K562 (cell line): ENCODE measurements at regions of chr3 and their contacts with region 1.

Region 1: DNA sequence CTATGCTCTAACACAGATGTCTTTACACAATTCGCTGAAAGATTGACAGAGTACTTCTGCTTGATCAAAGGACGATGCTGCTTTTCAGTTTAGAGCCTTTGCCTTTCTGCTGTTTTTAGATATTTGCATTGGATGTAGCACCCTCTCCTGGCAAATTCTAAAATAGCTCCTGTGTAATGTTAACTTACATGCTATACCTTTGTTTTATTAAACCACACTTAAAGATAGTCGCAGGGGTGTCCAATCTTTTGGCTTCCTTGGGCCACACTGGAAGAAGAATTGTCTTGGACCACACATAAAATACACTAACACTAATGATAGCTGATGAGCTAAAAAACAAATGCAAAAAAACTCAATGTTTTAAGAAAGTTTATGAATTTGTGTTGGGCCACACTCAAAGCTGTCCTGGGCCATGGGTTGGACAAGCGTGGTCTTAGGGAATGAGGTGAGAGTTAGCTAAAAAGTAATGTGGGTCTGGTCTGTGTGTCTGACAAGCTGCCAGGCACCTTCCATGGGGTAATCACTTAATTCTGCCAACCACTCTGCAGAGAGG is 62.9 kb downstream of the ATG7 start:
- DNase-seq: peak; percentile 44 to 70 (median 52)
- ATAC-seq: peak; percentile 94
- H3K4me3 ChIP-seq: no peak overlapping the region
- H3K27ac ChIP-seq: no peak overlapping the region
- H3K4me1 ChIP-seq: no peaks in the 10 kb centered on the region
- H3K27me3 ChIP-seq: no peaks in the 10 kb centered on the region
- CTCF ChIP-seq: peak; percentile 64 to 89 (median 67); a peak in 5 of 6 replicates
- EP300 ChIP-seq: no peak
- POLR2A ChIP-seq: no peak
- RAD21 ChIP-seq: peak; percentile 90 to 97

Region 2: DNA sequence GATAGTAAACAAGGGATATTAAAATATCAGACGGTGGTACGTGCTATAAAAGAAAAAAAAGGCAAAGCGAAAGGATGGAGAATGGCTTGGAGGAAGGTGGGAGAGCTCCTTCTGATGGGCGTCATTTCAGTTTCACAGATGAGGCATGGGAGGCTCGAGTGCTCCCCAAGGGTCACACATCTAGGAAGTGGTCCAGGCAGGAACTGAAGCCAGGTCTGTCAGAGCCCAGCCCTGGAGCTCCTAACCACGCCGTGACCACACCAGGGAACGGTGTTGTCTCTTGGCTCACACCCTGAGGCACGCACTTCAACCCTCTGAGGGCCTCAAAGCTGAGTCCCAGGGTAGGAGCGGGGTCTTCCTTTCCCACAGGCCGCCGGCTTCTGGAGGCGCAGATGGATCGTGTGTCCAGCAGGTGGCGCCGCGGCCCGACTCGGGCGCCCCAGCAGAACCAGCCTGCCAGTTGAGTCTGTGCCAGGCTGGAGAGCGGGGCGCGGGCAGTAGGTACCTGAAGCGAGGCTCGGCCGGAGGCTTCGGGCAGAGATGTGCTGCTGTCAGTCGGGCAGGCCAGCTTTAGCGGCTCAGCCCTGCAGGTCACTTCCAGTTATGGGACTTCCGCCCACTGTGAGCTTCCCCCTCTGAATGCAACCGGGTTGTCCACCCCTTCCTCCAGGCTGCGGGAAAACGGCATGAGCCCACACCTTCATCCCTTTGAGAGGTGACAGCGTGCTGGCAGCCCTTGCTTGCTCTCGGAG is 274.5 kb before region 1 on chr3:
- CTCF ChIA-PET with region 1: interaction called, 3 read pairs
- POLR2A ChIA-PET with region 1: no interaction called
- in situ Hi-C with region 1: no loop called
- intact Hi-C with region 1: loop called (anchors 1 kb)
- DNase-seq: peak; percentile 53 to 77 (median 70)
- ATAC-seq: peak; percentile 92
- H3K4me3 ChIP-seq: no peak overlapping the region
- H3K27ac ChIP-seq: no peak overlapping the region
- H3K4me1 ChIP-seq: peaks cover 0 to 10% of the 10 kb centered on the region in 2 experiments; a peak in 2 of 5 replicates
- H3K27me3 ChIP-seq: peaks cover 0 to 19% of the 10 kb centered on the region in 2 experiments; a peak in 2 of 5 replicates
- CTCF ChIP-seq: peak; percentile 71 to 87 (median 82)
- EP300 ChIP-seq: no peak
- POLR2A ChIP-seq: no peak
- RAD21 ChIP-seq: peak; percentile 66 to 79

Region 3: GRCh38 chr3:11230125-11230524 is 105.0 kb before region 1 on chr3:
- CTCF ChIA-PET with region 1: no interaction called
- POLR2A ChIA-PET with region 1: interaction called, 4 read pairs
- in situ Hi-C with region 1: loop called (anchors 5 kb)
- intact Hi-C with region 1: no loop called
- DNase-seq: no peak
- ATAC-seq: no peak
- H3K4me3 ChIP-seq: no peak overlapping the region
- H3K27ac ChIP-seq: no peak overlapping the region
- H3K4me1 ChIP-seq: peaks cover 0 to 3% of the 10 kb centered on the region in 2 experiments; a peak in 2 of 5 replicates
- H3K27me3 ChIP-seq: peaks cover 10 to 15% of the 10 kb centered on the region in 2 experiments
- CTCF ChIP-seq: no peak
- EP300 ChIP-seq: no peak
- POLR2A ChIP-seq: no peak
- RAD21 ChIP-seq: no peak

Region 4: DNA sequence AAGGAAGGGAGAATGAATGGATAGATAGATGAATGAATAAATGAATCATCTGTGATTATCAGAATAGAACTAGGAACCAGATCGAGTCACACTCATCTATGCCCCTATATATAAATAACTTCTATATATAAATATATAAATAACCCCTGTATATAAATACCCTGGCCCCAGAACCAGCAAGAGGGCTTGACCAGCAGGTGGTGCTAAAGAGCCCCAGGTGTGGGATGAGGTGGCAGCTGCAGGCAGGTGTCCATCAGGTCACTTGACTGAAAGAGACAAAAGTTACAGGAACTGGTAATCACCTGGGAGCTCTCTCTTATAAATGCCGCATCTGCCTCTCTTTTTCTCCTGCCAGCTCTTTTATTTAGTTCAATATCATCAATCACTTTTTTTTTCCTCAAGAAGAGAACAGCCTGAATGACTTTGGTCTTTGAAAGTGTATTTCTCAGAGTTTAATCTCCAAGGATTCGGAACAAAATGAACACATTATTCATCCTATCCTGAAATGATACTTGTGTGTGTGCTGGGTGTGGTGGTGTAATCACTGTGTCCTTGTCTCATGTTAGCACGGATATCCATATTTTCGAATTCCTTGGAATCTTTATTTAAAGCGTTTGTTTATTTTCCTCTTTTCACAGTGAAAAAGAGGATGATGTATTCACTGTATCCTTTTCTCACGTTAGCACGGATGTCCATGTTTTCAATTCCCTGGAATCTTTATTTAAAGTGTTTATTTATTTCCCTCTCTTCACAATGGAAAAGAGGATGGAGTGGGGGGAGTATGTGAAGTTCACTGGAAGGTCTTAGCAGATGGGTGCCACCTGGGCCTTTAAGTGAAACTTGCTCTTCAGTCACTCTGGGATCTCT is 98.3 kb before region 1 on chr3:
- CTCF ChIA-PET with region 1: interaction called, 29 read pairs
- POLR2A ChIA-PET with region 1: interaction called, 7 read pairs
- in situ Hi-C with region 1: loop called (anchors 5 kb)
- intact Hi-C with region 1: loop called (anchors 1 kb)
- DNase-seq: peak; percentile 70 to 79 (median 76)
- ATAC-seq: peak; percentile 96
- H3K4me3 ChIP-seq: no peak overlapping the region
- H3K27ac ChIP-seq: no peak overlapping the region
- H3K4me1 ChIP-seq: no peaks in the 10 kb centered on the region
- H3K27me3 ChIP-seq: peaks cover 13% of the 10 kb centered on the region in 2 experiments
- CTCF ChIP-seq: peak; percentile 82 to 93 (median 89)
- EP300 ChIP-seq: no peak
- POLR2A ChIP-seq: no peak
- RAD21 ChIP-seq: peak; percentile 76 to 83

Region 5: DNA sequence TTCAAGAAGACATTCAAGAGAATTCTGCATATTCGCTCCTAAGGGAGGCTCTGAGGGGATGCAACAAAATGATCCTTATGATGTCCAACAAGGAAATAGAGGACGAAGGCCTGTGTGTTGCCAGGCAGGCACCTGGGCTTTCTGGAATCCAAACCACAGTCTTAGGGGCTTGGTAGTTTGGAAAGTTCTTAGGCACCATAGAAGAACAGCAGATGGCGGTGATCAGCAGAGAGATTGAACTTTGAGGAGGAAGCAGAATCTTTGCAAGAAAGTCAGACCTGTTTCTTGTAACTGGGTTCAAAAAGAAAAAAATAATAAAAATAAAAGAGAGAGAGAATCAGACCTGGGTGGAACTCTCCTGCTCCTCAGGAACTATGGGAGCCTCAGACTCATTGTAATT is 74.7 kb before region 1 on chr3:
- CTCF ChIA-PET with region 1: no interaction called
- POLR2A ChIA-PET with region 1: interaction called, 3 read pairs
- in situ Hi-C with region 1: no loop called
- intact Hi-C with region 1: loop called (anchors 1 kb)
- DNase-seq: no peak
- ATAC-seq: peak; percentile 66
- H3K4me3 ChIP-seq: no peak overlapping the region
- H3K27ac ChIP-seq: no peak overlapping the region
- H3K4me1 ChIP-seq: peaks cover 0 to 6% of the 10 kb centered on the region in 2 experiments; a peak in 2 of 5 replicates
- H3K27me3 ChIP-seq: peaks cover 17 to 21% of the 10 kb centered on the region in 2 experiments
- CTCF ChIP-seq: peak; percentile 28 to 50 (median 35); a peak in 4 of 6 replicates
- EP300 ChIP-seq: no peak
- POLR2A ChIP-seq: no peak
- RAD21 ChIP-seq: peak; percentile 41 to 68